CD14-positive monocyte (primary cell): ENCODE measurements at regions of chr20 and their contacts with region 1.

Region 1: GRCh38 chr20:3679749-3680700 is 1.8 kb downstream of the ADAM33 start:
- DNase-seq: no peak
- H3K4me3 ChIP-seq: no peak overlapping the region
- H3K4me3 Mint-ChIP-seq: peak overlapping the region in 1 of 2 donors; percentile 48
- H3K27ac ChIP-seq: no peak overlapping the region
- H3K27ac Mint-ChIP-seq: no peak overlapping the region
- H3K4me1 ChIP-seq: peaks cover 10% of the 10 kb centered on the region in 2 donors
- H3K4me1 Mint-ChIP-seq: peaks cover 13% of the 10 kb centered on the region
- H3K27me3 ChIP-seq: peaks cover 17 to 72% of the 10 kb centered on the region in 2 donors
- H3K27me3 Mint-ChIP-seq: peaks cover 69 to 82% (median 71%) of the 10 kb centered on the region in 3 donors
- CTCF ChIP-seq: no peak

Region 2: DNA sequence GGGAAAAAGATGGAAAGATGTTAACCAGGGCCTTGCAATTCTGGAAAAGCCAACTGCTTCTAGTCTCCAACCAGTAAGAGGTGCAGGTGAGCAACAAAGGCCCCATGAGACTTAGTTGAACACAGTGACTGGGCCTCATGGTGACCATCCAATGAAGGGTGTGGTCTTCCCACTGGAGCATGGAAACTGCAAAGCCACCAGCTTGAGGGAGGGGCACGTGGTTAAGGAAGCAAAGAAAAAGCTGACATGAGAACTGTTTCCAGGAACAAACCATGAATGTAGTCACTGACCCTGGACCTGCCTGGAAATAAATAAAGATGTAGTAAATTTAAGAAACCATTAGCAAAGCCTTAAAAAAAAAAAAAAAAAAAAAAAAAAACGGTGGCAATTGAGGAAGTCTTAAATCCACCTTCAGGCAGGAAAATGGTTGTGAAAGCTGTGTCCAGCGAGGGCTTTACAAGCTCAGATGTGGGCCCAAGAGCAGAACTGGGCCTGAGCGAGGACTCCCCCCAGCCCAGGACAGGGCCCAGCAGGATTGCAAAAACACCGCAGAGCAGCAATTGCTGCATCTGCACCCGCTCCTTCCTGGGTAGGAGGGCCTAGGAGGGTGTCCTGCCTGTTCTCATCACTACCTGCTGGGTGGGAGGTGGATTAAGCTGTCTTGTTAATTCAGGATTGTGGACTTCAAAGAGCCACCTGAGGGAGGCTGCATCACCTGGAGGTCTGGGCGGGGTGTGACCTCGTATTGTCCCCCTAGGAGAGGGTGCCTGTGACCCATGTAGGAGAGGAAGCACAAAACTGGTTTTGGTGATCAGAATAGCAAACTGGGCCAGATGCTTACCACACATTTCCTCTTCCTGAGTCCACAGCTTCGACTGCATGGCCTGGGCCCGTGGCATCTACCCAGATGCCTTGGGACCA is 27.1 kb before region 1 on chr20:
- intact Hi-C with region 1: no loop called
- DNase-seq: peak in 2 of 3 donors; percentile 15 to 21
- H3K4me3 ChIP-seq: no peak overlapping the region
- H3K4me3 Mint-ChIP-seq: no peak overlapping the region
- H3K27ac ChIP-seq: peak overlapping the region; percentile 28 to 63
- H3K27ac Mint-ChIP-seq: peak overlapping the region in 6 of 7 donors; percentile 54 to 82 (median 70)
- H3K4me1 ChIP-seq: peaks cover 15 to 16% of the 10 kb centered on the region in 2 donors
- H3K4me1 Mint-ChIP-seq: peaks cover 19% of the 10 kb centered on the region
- H3K27me3 ChIP-seq: peaks cover 0 to 2% of the 10 kb centered on the region in 2 donors
- H3K27me3 Mint-ChIP-seq: peaks cover 4 to 9% (median 8%) of the 10 kb centered on the region in 3 donors
- CTCF ChIP-seq: no peak

Region 3: GRCh38 chr20:3744806-3745685 is 65.0 kb after region 1 on chr20:
- intact Hi-C with region 1: loop called (anchors 2 to 5 kb)
- DNase-seq: peak; percentile 77 to 86 (median 83)
- H3K4me3 ChIP-seq: peak overlapping the region in 1 of 3 experiments; percentile 55
- H3K4me3 Mint-ChIP-seq: peak overlapping the region; percentile 65 to 82
- H3K27ac ChIP-seq: no peak overlapping the region
- H3K27ac Mint-ChIP-seq: peak overlapping the region in 5 of 7 donors; percentile 14 to 73 (median 44)
- H3K4me1 ChIP-seq: peaks cover 6 to 17% of the 10 kb centered on the region in 2 donors
- H3K4me1 Mint-ChIP-seq: peaks cover 9% of the 10 kb centered on the region
- H3K27me3 ChIP-seq: no peaks in the 10 kb centered on the region
- H3K27me3 Mint-ChIP-seq: peaks cover 8 to 29% (median 22%) of the 10 kb centered on the region in 3 donors
- CTCF ChIP-seq: no peak

Region 4: GRCh38 chr20:3753098-3753980 is 73.3 kb after region 1 on chr20:
- intact Hi-C with region 1: loop called (anchors 2 to 5 kb)
- DNase-seq: peak; percentile 60 to 67 (median 66)
- H3K4me3 ChIP-seq: no peak overlapping the region
- H3K4me3 Mint-ChIP-seq: no peak overlapping the region
- H3K27ac ChIP-seq: no peak overlapping the region
- H3K27ac Mint-ChIP-seq: peak overlapping the region in 3 of 7 donors; percentile 13 to 71 (median 42)
- H3K4me1 ChIP-seq: peaks cover 24 to 45% of the 10 kb centered on the region in 2 donors
- H3K4me1 Mint-ChIP-seq: peaks cover 31% of the 10 kb centered on the region
- H3K27me3 ChIP-seq: no peaks in the 10 kb centered on the region
- H3K27me3 Mint-ChIP-seq: peaks cover 0 to 4% (median 2%) of the 10 kb centered on the region in 3 donors
- CTCF ChIP-seq: peak; percentile 81

Region 5: DNA sequence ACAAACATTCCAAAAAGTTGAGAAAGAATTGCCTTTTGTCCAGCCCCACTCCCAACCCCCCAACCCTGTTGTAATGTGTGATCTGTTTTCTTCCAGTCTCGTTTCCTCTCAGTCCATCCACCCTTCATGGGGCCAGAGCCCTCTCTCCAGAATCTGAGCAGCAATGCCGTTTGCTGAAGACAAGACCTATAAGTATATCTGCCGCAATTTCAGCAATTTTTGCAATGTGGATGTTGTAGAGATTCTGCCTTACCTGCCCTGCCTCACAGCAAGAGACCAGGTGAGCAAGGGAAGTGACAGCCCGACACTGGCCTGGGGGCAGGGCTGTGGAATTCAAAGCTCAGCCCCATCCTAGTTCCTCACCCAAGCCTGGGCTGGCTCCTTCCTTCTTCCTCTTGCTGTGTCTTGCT is 174.4 kb after region 1 on chr20:
- intact Hi-C with region 1: loop called (anchors 2 to 5 kb)
- DNase-seq: peak in 2 of 3 donors; percentile 11 to 17
- H3K4me3 ChIP-seq: no peak overlapping the region
- H3K4me3 Mint-ChIP-seq: peak overlapping the region in 1 of 2 donors; percentile 56
- H3K27ac ChIP-seq: peak overlapping the region; percentile 42 to 61
- H3K27ac Mint-ChIP-seq: peak overlapping the region; percentile 33 to 89 (median 82)
- H3K4me1 ChIP-seq: peaks cover 17 to 18% of the 10 kb centered on the region in 2 donors
- H3K4me1 Mint-ChIP-seq: peaks cover 22% of the 10 kb centered on the region
- H3K27me3 ChIP-seq: no peaks in the 10 kb centered on the region
- H3K27me3 Mint-ChIP-seq: peaks cover 0 to 3% (median 2%) of the 10 kb centered on the region in 3 donors
- CTCF ChIP-seq: no peak